ENCODE measurements at regions of chr11 and their contacts with region 1.

Region 1: GRCh38 chr11:131674051-131674755 is 303.8 kb downstream of the NTM start:
- DNase-seq: peak; percentile 51
- H3K4me3 ChIP-seq: no peak overlapping the region
- H3K27me3 ChIP-seq: no peaks in the 10 kb centered on the region
- CTCF ChIP-seq: peak; percentile 96

Region 2: GRCh38 chr11:131025020-131025419 is 649.2 kb before region 1 on chr11:
- CTCF ChIA-PET with region 1: interaction called, 14 read pairs
- POLR2A ChIA-PET with region 1: no interaction called
- DNase-seq: no peak
- H3K4me3 ChIP-seq: no peak overlapping the region
- H3K27me3 ChIP-seq: no peaks in the 10 kb centered on the region
- CTCF ChIP-seq: peak; percentile 77

Region 3: DNA sequence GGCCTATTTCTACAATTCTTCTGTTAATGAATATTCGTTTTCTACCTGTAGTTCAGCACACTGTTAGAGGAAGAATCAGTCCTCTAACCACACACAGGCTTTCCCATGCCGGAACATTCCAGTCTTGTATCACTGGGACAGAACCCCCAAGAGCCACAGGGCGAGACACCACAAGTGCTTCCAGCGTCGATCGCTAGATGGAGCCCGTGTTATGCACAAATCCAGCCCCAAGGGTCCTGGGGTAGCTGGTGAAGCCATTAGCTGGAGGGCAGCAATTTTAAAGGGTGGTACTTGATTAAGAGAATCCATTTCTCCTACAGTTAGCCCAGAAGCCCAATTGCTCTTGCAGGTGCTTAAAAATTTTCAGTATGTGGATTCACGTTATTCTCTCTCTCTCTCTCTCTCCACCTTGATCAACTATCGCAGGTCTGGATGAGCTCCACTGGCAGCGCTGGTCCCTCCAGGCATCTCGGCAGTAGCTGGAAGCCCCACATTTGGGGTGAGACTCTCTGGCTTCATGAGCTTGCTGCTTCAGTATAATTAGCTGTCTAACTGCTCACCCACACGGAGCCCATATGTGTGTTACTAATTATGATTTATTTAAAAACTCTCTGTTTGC is 609.7 kb before region 1 on chr11:
- CTCF ChIA-PET with region 1: interaction called, 36 read pairs
- POLR2A ChIA-PET with region 1: interaction called, 3 read pairs
- DNase-seq: no peak
- H3K4me3 ChIP-seq: no peak overlapping the region
- H3K27me3 ChIP-seq: no peaks in the 10 kb centered on the region
- CTCF ChIP-seq: peak; percentile 96

Region 4: DNA sequence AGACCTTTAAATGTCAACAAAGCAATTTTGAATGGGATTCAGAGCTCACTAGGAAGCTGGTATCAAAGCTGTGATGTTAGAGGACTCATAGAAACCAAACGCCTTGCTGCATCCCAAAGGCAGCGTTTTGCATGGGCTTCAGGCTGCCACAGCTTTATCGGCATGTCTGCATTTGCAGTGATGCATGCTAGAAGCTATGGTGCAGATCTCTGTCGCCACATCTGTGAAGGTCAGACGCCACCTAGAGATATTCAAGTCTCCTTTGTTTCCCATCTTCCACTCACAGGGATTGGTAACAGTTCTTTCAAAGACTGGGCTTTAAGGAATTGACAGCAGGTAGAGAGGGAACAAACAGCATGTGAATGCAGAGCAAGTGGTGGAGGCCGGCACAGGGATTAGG is 256.0 kb before region 1 on chr11:
- CTCF ChIA-PET with region 1: no interaction called
- POLR2A ChIA-PET with region 1: no interaction called
- DNase-seq: no peak
- H3K4me3 ChIP-seq: no peak overlapping the region
- H3K27me3 ChIP-seq: no peaks in the 10 kb centered on the region
- CTCF ChIP-seq: no peak

Region 5: DNA sequence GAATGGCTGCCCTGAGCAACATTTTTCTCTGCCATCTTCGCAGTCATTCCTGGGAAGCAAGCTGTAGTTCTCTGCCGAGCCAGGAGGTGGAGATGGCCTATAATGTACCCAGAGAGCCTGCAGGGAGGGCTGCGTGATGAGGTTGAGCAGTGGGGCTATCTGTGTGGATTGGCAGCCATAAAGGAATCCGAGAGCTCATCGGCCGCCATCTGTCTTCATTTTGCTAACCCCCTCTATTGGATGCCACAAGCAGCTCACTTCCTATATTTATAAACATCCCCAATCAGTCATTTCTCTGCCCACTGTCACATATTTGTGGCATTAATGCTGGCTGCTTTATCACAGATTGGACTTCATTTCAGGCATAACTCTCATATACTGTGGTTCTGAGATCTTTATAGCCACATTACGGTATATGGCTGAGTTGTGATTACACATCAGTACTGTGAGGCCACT is 94.2 kb before region 1 on chr11:
- CTCF ChIA-PET with region 1: interaction called, 35 read pairs
- POLR2A ChIA-PET with region 1: interaction called, 3 read pairs
- DNase-seq: no peak
- H3K4me3 ChIP-seq: no peak overlapping the region
- H3K27me3 ChIP-seq: 0 out of 2 replicates have a peak, but pooled peaks cover 1% of the 10 kb centered on the region
- CTCF ChIP-seq: peak; percentile 56

Region 6: GRCh38 chr11:131688051-131688698 is 14.0 kb after region 1 on chr11:
- CTCF ChIA-PET with region 1: interaction called, 27 read pairs
- POLR2A ChIA-PET with region 1: no interaction called
- DNase-seq: no peak
- H3K4me3 ChIP-seq: peak overlapping the region; percentile 25
- H3K27me3 ChIP-seq: peaks cover 8% of the 10 kb centered on the region; the same call in 1 of the 2 replicates
- CTCF ChIP-seq: peak; percentile 84

Region 7: GRCh38 chr11:131694526-131695424 is 20.6 kb after region 1 on chr11:
- CTCF ChIA-PET with region 1: interaction called, 16 read pairs
- POLR2A ChIA-PET with region 1: no interaction called
- DNase-seq: peak; percentile 18
- H3K4me3 ChIP-seq: no peak overlapping the region
- H3K27me3 ChIP-seq: no peaks in the 10 kb centered on the region
- CTCF ChIP-seq: peak; percentile 98